Dendritic cell treated with granulocyte-macrophage colony-stimulating factor and Interleukin-4, amounts not matched to agents 40 ng/mL and 50 ng/mL, for 4 days (primary cell): ENCODE measurements at regions of chr18 and their contacts with region 1.

Region 1: GRCh38 chr18:43236921-43237560 is 40.2 kb downstream of the SYT4 start:
- H3K4me3 Mint-ChIP-seq: no peak overlapping the region
- H3K27ac Mint-ChIP-seq: no peak overlapping the region
- H3K4me1 Mint-ChIP-seq: no peaks in the 10 kb centered on the region
- H3K27me3 Mint-ChIP-seq: no peaks in the 10 kb centered on the region

Region 2: DNA sequence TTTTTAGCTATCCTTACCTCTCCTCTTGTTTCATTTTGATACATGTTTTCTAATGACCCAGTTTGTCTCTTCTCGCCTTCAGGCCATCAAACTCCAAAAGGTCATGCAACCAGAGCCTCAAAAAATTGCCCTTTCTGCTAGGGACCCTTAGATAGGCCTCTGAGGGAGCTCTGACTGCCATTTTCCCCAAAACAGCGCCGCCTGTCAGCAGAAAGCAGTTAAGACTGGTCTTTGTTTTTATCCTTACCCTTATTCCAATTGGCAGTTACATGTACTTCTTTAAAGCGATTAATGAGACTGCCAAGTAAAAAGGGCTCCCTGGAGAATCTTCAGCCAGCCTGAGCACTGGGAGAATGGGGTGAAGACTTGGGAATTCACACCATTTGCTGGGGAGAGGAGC is 66.5 kb before region 1 on chr18:
- intact Hi-C with region 1: loop called (anchors 10 kb)
- H3K4me3 Mint-ChIP-seq: no peak overlapping the region
- H3K27ac Mint-ChIP-seq: no peak overlapping the region
- H3K4me1 Mint-ChIP-seq: no peaks in the 10 kb centered on the region
- H3K27me3 Mint-ChIP-seq: no peaks in the 10 kb centered on the region

Region 3: GRCh38 chr18:43192408-43192807 is 44.6 kb before region 1 on chr18:
- intact Hi-C with region 1: no loop called
- H3K4me3 Mint-ChIP-seq: no peak overlapping the region
- H3K27ac Mint-ChIP-seq: no peak overlapping the region
- H3K4me1 Mint-ChIP-seq: no peaks in the 10 kb centered on the region
- H3K27me3 Mint-ChIP-seq: no peaks in the 10 kb centered on the region